Activated CD4-positive, alpha-beta memory T cell treated with anti-CD3 and anti-CD28 coated beads for 36 hours (primary cell): ENCODE measurements at regions of chr16 and their contacts with region 1.

Region 1: GRCh38 chr16:589658-590159 is at the start of gene RAB40C:
- DNase-seq: peak; percentile 99
- H3K4me3 Mint-ChIP-seq: peak within 1 kb of the TSS; percentile 83
- H3K27ac Mint-ChIP-seq: peak within 1 kb of the TSS; percentile 96
- H3K4me1 Mint-ChIP-seq: peaks cover 27% of the 10 kb centered on the region
- H3K27me3 Mint-ChIP-seq: no peaks in the 10 kb centered on the region
- total RNA-seq, gene RAB40C: 10.1 to 10.6 TPM

Region 2: DNA sequence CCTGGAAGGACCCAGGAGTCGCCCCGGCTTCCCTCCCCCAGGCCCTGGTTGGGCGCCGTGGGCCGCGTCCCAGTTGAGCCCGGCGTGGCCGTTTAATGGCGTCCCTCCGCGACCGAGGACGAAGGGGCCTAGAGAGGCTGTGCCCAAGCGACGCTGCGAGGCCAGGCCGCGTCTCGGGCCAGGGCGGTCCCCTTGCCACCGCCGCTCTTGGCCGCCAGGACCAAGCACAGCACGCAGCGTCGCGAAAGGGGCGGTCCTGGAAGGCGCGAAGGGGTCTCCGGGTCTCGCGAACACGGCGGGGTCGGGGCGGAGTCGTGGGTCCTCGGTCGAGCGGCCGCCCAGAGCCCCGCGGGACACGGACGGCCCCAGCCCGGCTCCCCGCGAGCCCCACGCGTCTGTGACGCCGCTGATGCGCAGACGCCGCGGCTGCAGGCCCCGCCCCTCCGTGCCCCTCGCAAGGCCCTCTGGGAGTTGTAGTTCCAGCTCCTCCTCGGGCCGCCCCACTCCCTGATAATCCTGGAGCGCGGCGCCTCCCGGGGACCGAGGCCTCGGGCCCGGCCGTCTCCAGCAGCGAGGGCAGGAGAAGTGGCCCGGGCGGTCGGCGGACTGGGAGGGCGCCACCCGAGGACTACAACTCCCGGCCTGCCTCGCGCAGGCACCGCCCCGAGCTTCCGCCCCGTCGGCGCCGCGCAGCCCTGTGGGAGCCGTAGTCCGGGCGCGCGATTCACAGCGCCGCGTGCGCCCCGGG is 62.5 kb before region 1 on chr16 and contains the start of gene CAPN15:
- CTCF ChIA-PET with region 1: no interaction called
- POLR2A ChIA-PET with region 1: interaction called, 7 read pairs
- intact Hi-C with region 1: loop called (anchors 1 kb)
- DNase-seq: peak; percentile 88
- H3K4me3 Mint-ChIP-seq: peak within 1 kb of the TSS; percentile 91
- H3K27ac Mint-ChIP-seq: peak within 1 kb of the TSS; percentile 99
- H3K4me1 Mint-ChIP-seq: peaks cover 39% of the 10 kb centered on the region
- H3K27me3 Mint-ChIP-seq: no peaks in the 10 kb centered on the region
- total RNA-seq, gene CAPN15: 69.7 to 76.2 TPM

Region 3: DNA sequence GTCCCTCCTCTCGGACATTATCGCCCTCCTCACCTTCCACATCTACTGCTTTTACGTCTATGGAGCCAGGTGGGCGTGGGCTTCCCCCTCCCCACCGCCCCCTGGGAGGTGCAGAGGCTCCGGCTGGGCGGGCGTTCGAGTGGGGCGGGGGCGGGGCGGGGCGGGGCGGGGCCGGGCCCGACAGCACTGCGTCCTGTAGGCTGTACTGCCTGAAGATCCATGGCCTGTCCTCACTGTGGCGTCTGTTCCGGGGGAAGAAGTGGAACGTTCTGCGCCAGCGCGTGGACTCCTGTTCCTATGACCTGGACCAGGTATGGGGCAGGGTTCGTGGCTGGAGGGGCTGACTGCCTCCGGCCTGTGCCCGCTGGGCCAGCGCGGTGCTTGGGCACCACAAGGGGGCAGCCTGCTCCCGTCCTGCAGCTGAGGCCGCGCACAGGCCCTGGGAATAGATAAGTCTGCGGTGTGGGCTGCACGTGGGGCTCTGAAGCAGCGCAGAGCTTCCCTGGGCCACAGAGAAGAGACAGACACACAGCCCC is 10.8 kb before region 1 on chr16:
- CTCF ChIA-PET with region 1: interaction called, 10 read pairs
- POLR2A ChIA-PET with region 1: interaction called, 4 read pairs
- intact Hi-C with region 1: loop called (anchors 1 kb)
- DNase-seq: peak; percentile 81
- H3K4me3 Mint-ChIP-seq: no peak overlapping the region
- H3K27ac Mint-ChIP-seq: no peak overlapping the region
- H3K4me1 Mint-ChIP-seq: no peaks in the 10 kb centered on the region
- H3K27me3 Mint-ChIP-seq: no peaks in the 10 kb centered on the region

Region 4: GRCh38 chr16:636206-637080 is 46.7 kb after region 1 on chr16 and contains the start of gene METTL26:
- CTCF ChIA-PET with region 1: interaction called, 5 read pairs
- POLR2A ChIA-PET with region 1: interaction called, 6 read pairs
- intact Hi-C with region 1: loop called (anchors 1 kb)
- DNase-seq: peak; percentile 96
- H3K4me3 Mint-ChIP-seq: peak within 1 kb of the TSS; percentile 90
- H3K27ac Mint-ChIP-seq: peak within 1 kb of the TSS; percentile 89
- H3K4me1 Mint-ChIP-seq: peaks cover 5% of the 10 kb centered on the region
- H3K27me3 Mint-ChIP-seq: peaks cover 3% of the 10 kb centered on the region
- total RNA-seq, gene METTL26: 113 to 117 TPM

Region 5: GRCh38 chr16:684067-684794 is 94.5 kb after region 1 on chr16 and contains the start of gene JMJD8:
- CTCF ChIA-PET with region 1: no interaction called
- POLR2A ChIA-PET with region 1: interaction called, 3 read pairs
- intact Hi-C with region 1: loop called (anchors 5 kb)
- DNase-seq: peak; percentile 98
- H3K4me3 Mint-ChIP-seq: peak within 1 kb of the TSS; percentile 82
- H3K27ac Mint-ChIP-seq: peak within 1 kb of the TSS; percentile 74
- H3K4me1 Mint-ChIP-seq: peaks cover 37% of the 10 kb centered on the region
- H3K27me3 Mint-ChIP-seq: no peaks in the 10 kb centered on the region
- total RNA-seq, gene JMJD8: 29.8 to 30.3 TPM